ENCODE measurements at regions of chr19 and their contacts with region 1.

Region 1: GRCh38 chr19:4873930-4874329 is 6.5 kb upstream of the PLIN3 start:
- DNase-seq: no peak
- ATAC-seq: no peak
- H3K4me3 Mint-ChIP-seq: no peak overlapping the region
- H3K27ac Mint-ChIP-seq: no peak overlapping the region
- H3K4me1 Mint-ChIP-seq: peaks cover 22% of the 10 kb centered on the region
- H3K27me3 Mint-ChIP-seq: peaks cover 3% of the 10 kb centered on the region

Region 2: DNA sequence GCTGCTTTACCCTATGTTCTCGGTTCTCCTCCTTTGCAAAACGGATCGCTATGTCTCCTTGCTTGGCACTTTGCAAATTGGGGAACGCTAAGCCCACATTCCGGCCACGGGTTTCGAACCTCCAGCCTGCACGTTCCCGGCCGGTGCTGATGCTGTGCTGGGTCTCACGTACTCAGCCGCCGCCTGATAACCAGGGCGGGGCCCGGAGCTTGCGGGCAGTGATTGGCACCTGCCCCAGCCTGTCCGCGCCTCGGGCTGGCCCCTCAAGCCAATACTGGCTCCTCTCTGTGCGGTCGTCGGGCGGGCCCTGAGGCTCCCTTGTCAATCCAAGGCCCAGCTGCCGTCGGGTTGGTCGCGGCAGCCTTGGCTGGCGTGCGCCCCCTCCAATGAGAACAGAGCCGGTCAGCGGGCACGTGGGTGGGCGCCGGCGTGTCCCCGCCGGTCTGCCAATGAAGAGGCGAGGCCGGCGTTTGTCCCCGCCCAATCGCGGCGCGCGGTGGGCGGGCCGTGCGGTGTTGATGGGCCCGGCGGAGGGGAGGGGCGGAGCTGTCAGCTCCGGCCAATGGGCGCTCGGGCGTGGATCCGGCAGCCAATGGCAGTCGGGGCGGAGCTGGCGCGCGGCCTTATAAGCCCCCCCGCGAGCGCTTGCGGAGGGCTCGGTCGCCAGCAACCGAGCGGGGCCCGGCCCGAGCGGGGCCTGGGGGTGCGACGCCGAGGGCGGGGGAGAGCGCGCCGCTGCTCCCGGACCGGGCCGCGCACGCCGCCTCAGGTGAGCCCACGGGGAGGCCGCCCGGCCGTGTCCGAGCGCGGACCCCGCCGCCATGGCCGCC is 94.7 kb after region 1 on chr19 and contains the start of gene KDM4B:
- CTCF ChIA-PET with region 1: interaction called, 14 read pairs
- DNase-seq: peak; percentile 99
- ATAC-seq: peak; percentile 96
- H3K4me3 Mint-ChIP-seq: peak within 1 kb of the TSS; percentile 87
- H3K27ac Mint-ChIP-seq: peak within 1 kb of the TSS; percentile 93
- H3K4me1 Mint-ChIP-seq: peaks cover 38% of the 10 kb centered on the region
- H3K27me3 Mint-ChIP-seq: no peaks in the 10 kb centered on the region
- total RNA-seq, gene KDM4B: 31.2 to 42.3 TPM